A673 (cell line): ENCODE measurements at regions of chr20 and their contacts with region 1.

Region 1: DNA sequence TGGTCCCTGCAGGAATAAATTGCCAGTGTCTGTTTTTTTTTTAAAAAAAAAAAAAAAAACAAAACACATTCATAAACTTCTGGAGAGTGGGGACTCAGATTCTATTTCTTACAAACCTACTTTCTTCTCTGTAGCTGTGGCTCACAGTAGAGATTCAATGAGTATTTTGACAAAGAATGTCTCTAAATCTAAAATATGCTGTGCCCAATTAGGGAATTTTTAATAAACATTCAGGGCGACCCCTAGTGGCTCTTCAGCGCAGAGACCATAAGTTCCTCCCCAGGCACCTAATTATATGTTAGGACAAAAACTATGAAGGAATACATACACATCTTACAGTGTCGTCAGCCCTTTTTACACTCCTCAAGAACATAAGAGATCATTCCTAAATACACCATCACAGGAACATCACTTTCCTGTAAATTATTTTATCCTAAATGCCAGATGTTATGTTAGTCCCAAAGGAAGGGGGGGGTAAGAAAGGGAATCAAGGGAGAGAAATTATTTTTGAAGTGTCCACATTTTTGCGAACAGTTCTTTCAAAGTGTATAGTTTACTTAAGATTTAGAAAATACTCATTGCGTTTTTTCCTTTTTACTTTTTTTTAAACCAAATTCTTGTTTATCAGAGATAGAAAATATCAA is 21.8 kb upstream of the NAA20 start:
- DNase-seq: peak; percentile 83
- H3K4me3 ChIP-seq: no peak overlapping the region
- H3K27ac ChIP-seq: no peak overlapping the region
- H3K4me1 ChIP-seq: peaks cover 57% of the 10 kb centered on the region
- H3K27me3 ChIP-seq: no peaks in the 10 kb centered on the region
- CTCF ChIP-seq: peak; percentile 91

Region 2: DNA sequence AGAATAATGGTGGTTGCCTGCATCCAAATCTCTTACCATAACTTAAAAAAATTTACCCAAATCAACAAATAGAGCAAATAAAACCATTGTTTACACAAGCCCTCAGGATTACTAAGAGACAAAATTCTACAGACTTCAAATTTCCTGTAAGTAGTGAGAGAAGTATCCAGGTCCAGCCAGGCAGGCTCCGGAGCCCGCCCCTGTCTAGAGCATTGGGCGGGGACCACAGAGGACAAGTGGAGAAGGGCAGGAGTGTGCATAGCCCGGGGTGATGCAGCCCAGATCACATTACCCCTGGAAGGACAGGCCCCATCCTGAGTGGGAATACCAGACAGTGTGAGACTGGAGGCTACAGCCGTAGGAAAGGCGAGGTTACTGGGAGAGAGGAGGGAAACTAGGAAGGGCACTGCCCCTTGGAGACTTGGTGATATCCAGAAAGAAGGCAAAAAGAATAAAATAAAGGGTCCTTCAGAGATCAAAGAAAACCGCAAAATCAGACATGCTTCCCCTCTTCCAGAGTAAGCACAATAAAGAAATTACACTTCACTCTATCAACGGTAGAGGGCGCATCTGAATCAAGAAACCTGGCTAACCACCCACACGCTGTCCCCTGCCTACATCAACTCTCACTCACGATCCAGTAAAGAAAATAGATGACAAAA is 210.7 kb before region 1 on chr20:
- CTCF ChIA-PET with region 1: interaction called, 4 read pairs
- POLR2A ChIA-PET with region 1: no interaction called
- intact Hi-C with region 1: loop called (anchors 1 kb)
- DNase-seq: peak; percentile 91
- H3K4me3 ChIP-seq: no peak overlapping the region
- H3K27ac ChIP-seq: peak overlapping the region; percentile 21
- H3K4me1 ChIP-seq: peaks cover 33% of the 10 kb centered on the region
- H3K27me3 ChIP-seq: no peaks in the 10 kb centered on the region
- CTCF ChIP-seq: peak; percentile 89

Region 3: DNA sequence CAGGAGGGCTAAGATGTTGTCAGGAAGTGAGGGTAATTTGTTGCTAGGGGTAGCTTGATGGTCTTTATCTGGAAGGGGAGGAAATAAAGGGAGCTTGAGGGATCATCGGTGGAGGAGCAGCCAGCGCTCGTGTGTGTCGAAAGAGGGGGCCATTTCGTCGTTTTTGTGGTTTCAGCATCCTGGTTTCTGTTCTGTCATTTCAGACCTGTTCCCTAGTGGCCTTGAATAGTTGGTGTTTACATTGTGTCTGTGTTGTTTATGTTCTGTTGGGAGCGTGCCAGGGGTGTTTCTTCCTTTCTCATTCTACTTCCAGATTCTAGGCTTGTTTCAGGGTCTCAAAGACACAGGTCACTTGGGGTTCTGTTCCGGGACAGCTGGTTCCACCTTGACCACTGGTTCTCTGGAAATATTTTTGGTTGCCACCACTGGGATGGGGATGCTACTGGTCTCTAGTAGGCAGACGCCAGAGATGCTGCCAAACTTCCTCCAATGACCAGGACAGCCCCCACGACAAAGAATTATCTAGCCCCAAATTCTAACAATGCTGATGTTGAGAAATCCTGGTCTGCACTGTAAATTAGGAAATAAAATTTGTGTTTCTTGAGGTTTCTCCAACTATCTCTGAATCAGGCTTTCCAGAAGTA is 92.1 kb before region 1 on chr20:
- CTCF ChIA-PET with region 1: no interaction called
- POLR2A ChIA-PET with region 1: no interaction called
- intact Hi-C with region 1: loop called (anchors 5 kb)
- DNase-seq: peak; percentile 53
- H3K4me3 ChIP-seq: no peak overlapping the region
- H3K27ac ChIP-seq: no peak overlapping the region
- H3K4me1 ChIP-seq: no peaks in the 10 kb centered on the region
- H3K27me3 ChIP-seq: no peaks in the 10 kb centered on the region
- CTCF ChIP-seq: peak; percentile 41